ENCODE measurements at regions of chr6 and their contacts with region 1.

Region 1: GRCh38 chr6:13099771-13100170 is 228.6 kb downstream of the TBC1D7 start:
- DNase-seq: no peak
- H3K4me3 ChIP-seq: no peak overlapping the region
- H3K27ac ChIP-seq: no peak overlapping the region
- H3K4me1 ChIP-seq: peaks cover 0 to 82% (median 28%) of the 10 kb centered on the region in 4 donors
- H3K27me3 ChIP-seq: no peaks in the 10 kb centered on the region
- CTCF ChIP-seq: no peak

Region 2: GRCh38 chr6:12363651-12364381 is 736.0 kb before region 1 on chr6:
- intact Hi-C with region 1: no loop called
- DNase-seq: no peak
- H3K4me3 ChIP-seq: no peak overlapping the region
- H3K27ac ChIP-seq: peak overlapping the region in 1 of 2 donors; percentile 2
- H3K4me1 ChIP-seq: peaks cover 0 to 47% (median 9%) of the 10 kb centered on the region in 4 donors
- H3K27me3 ChIP-seq: no peaks in the 10 kb centered on the region
- CTCF ChIP-seq: no peak

Region 3: GRCh38 chr6:13026557-13026956 is 73.2 kb before region 1 on chr6:
- intact Hi-C with region 1: loop called (anchors 10 kb)
- DNase-seq: no peak
- H3K4me3 ChIP-seq: peak overlapping the region; percentile 7 to 23
- H3K27ac ChIP-seq: peak overlapping the region; percentile 45 to 66
- H3K4me1 ChIP-seq: peaks cover 0 to 87% (median 19%) of the 10 kb centered on the region in 4 donors
- H3K27me3 ChIP-seq: no peaks in the 10 kb centered on the region
- CTCF ChIP-seq: no peak

Region 4: GRCh38 chr6:13135152-13135551 is 35.4 kb after region 1 on chr6:
- intact Hi-C with region 1: no loop called
- DNase-seq: no peak
- H3K4me3 ChIP-seq: no peak overlapping the region
- H3K27ac ChIP-seq: no peak overlapping the region
- H3K4me1 ChIP-seq: peaks cover 0 to 35% (median 0%) of the 10 kb centered on the region in 4 donors
- H3K27me3 ChIP-seq: no peaks in the 10 kb centered on the region
- CTCF ChIP-seq: no peak

Region 5: DNA sequence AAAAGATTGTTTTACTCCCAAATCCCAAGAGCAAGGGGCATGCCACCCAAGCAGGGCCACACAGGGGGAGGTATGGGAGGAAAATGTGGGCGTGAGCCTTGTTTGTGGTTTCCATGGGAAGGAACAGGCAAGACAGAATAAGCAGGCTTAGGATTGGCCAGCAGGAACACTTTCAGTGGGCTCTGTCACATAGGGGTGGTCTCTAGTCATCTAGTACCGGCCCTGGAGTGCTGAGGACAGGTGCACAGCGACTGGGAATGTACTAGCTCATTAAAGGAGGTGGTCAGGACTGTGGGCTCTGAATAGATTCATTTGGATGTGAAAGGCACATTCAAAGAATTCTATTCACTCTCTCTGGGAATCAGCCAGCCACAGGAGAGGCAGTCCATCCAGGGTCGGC is 53.0 kb after region 1 on chr6:
- intact Hi-C with region 1: no loop called
- DNase-seq: no peak
- H3K4me3 ChIP-seq: no peak overlapping the region
- H3K27ac ChIP-seq: no peak overlapping the region
- H3K4me1 ChIP-seq: peaks cover 0 to 62% (median under 1%) of the 10 kb centered on the region in 4 donors
- H3K27me3 ChIP-seq: no peaks in the 10 kb centered on the region
- CTCF ChIP-seq: no peak

Measured in tibial artery (tissue), 4 donors.